GM12878 (cell line): ENCODE measurements at regions of chr11 and their contacts with region 1.

Region 1: DNA sequence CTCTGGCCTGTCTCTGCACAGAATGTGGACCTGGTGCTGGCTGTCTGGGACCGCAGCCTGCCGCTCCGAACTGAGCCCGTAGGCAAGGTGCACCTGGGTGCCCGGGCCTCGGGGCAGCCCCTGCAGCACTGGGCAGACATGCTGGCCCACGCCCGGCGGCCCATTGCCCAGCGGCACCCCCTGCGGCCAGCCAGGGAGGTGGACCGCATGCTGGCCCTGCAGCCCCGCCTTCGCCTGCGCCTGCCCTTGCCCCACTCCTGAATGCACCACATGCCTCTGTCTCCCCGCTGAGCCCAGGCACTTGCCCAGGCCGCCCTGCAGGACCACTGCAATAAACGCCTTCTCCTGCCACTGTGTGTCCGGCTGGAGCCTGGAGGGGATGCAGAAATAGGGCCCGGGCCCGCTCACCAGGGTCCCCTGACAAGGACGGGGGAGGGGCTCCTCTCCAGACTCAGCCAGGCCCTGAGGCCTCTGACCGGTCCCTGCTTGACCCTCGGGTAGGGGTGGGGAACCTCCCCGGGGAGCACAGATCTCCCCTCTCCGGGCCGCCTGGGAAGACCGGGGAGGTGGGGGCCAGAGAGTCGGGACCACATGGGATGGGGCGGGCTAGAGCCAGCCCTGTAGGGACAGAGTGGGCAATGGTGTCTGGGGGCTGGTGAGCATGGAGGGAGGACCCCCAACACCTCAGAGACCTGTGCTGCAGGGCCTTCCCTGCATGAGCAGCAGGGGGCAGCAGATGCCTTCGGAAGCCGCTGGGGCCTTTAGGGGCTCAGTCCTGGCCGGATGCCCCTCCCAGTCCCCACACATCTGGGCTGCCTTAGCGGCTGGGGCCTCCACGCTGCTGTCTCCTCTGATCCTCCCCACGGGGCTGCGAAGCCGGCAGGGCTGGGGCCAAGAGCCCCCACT is 1.4 kb upstream of the TNNI2 start:
- DNase-seq: no peak
- ATAC-seq: peak; percentile 89
- H3K4me3 ChIP-seq: no peak overlapping the region; the same call in 1 of the 2 replicates
- H3K27ac ChIP-seq: no peak overlapping the region
- H3K4me1 ChIP-seq: peaks cover 15% of the 10 kb centered on the region
- H3K27me3 ChIP-seq: no peaks in the 10 kb centered on the region; a peak in 1 of 4 replicates
- CTCF ChIP-seq: peak; percentile 91 to 96 (median 94)
- EP300 ChIP-seq: no peak
- POLR2A ChIP-seq: no peak
- RAD21 ChIP-seq: peak; percentile 96

Region 2: DNA sequence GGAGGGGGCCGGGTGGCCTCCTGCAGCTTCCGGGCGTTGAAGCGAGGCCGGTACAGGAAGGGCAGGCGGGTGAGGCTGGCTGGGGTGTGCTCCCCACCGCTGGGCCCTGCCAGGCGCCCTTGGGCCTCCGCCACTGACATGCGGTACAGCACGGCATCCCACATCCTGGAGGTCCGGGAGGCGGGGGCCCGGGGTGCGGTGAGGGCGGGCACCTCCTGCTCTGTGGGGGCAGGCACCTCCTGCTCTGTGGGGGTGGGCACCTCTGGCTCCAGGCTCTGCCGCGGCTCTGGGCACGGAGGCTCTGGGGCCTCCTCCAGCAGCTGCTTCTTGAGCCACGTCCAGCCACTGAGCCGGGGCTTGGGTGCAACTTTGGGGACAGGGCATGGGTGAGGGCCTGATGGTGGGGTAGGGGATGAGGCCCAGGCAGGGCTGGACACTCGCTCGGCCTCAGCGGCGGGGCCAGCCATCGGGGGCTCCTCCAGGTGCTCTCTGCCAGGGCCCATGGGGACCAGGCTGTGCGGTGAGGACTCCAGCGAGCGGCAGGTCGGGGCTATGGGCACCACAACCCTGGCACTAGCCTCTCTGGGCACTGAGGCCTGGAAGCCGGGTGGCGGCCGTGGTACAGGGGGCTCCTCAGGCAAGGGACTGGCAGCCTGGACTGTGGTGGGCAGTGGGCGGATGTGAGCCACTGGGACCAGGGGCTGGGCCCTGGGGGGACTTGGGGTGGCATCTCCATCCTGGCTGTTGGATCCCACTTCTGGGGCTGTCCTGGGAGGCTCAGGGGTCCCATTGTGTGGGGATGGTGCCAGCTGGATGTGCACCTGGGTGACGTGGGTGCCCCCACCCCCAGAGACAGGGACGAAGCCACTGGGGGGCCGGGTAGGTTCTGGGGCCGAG is 52.0 kb after region 1 on chr11:
- CTCF ChIA-PET with region 1: no interaction called
- POLR2A ChIA-PET with region 1: no interaction called
- RAD21 ChIA-PET with region 1: no interaction called
- SMC1A ChIA-PET with region 1: no interaction called
- in situ Hi-C with region 1: no loop called
- intact Hi-C with region 1: loop called (anchors 5 kb)
- DNase-seq: no peak
- ATAC-seq: no peak
- H3K4me3 ChIP-seq: no peak overlapping the region
- H3K27ac ChIP-seq: no peak overlapping the region
- H3K4me1 ChIP-seq: no peaks in the 10 kb centered on the region
- H3K27me3 ChIP-seq: no peaks in the 10 kb centered on the region
- CTCF ChIP-seq: no peak
- EP300 ChIP-seq: no peak
- POLR2A ChIP-seq: peak; percentile 38
- RAD21 ChIP-seq: no peak

Region 3: GRCh38 chr11:1909524-1909923 is 72.1 kb after region 1 on chr11:
- CTCF ChIA-PET with region 1: no interaction called
- POLR2A ChIA-PET with region 1: no interaction called
- RAD21 ChIA-PET with region 1: no interaction called
- SMC1A ChIA-PET with region 1: no interaction called
- in situ Hi-C with region 1: no loop called
- intact Hi-C with region 1: no loop called
- DNase-seq: no peak
- ATAC-seq: no peak
- H3K4me3 ChIP-seq: no peak overlapping the region
- H3K27ac ChIP-seq: no peak overlapping the region
- H3K4me1 ChIP-seq: no peaks in the 10 kb centered on the region
- H3K27me3 ChIP-seq: no peaks in the 10 kb centered on the region; a peak in 1 of 4 replicates
- CTCF ChIP-seq: no peak
- EP300 ChIP-seq: no peak
- POLR2A ChIP-seq: no peak
- RAD21 ChIP-seq: no peak

Region 4: DNA sequence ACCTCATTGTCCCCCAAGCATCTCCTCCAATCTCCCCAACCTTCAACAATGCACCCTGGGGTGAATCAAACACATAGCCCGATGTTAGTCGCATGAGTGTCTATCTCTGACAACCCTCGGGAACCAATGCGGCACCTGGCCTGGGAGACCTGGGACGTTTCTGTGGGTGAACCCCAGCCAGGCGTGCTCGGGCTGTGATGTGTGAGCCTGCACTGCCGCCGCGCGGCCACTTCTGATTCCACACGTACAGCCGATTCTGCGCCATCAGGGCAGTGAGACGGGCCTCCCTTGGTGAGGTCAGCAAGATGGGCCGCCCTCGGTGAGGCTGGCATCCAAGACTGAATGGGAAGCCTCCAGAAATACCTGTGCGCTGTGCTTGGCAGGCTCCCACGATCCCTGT is 165.4 kb after region 1 on chr11:
- CTCF ChIA-PET with region 1: interaction called, 33 read pairs
- POLR2A ChIA-PET with region 1: interaction called, 3 read pairs
- RAD21 ChIA-PET with region 1: interaction called, 13 read pairs
- SMC1A ChIA-PET with region 1: interaction called, 17 read pairs
- in situ Hi-C with region 1: no loop called
- intact Hi-C with region 1: no loop called
- DNase-seq: no peak
- ATAC-seq: peak; percentile 79
- H3K4me3 ChIP-seq: no peak overlapping the region
- H3K27ac ChIP-seq: no peak overlapping the region
- H3K4me1 ChIP-seq: no peaks in the 10 kb centered on the region
- H3K27me3 ChIP-seq: no peaks in the 10 kb centered on the region
- CTCF ChIP-seq: no peak
- EP300 ChIP-seq: no peak
- POLR2A ChIP-seq: no peak
- RAD21 ChIP-seq: no peak

Region 5: GRCh38 chr11:2015025-2015424 is 177.6 kb after region 1 on chr11:
- CTCF ChIA-PET with region 1: no interaction called
- POLR2A ChIA-PET with region 1: no interaction called
- RAD21 ChIA-PET with region 1: no interaction called
- SMC1A ChIA-PET with region 1: no interaction called
- in situ Hi-C with region 1: no loop called
- intact Hi-C with region 1: no loop called
- DNase-seq: no peak
- ATAC-seq: no peak
- H3K4me3 ChIP-seq: no peak overlapping the region
- H3K27ac ChIP-seq: no peak overlapping the region
- H3K4me1 ChIP-seq: no peaks in the 10 kb centered on the region
- H3K27me3 ChIP-seq: no peaks in the 10 kb centered on the region
- CTCF ChIP-seq: no peak
- EP300 ChIP-seq: no peak
- POLR2A ChIP-seq: no peak
- RAD21 ChIP-seq: no peak